ENCODE measurements at regions of chr20 and their contacts with region 1.

Region 1: DNA sequence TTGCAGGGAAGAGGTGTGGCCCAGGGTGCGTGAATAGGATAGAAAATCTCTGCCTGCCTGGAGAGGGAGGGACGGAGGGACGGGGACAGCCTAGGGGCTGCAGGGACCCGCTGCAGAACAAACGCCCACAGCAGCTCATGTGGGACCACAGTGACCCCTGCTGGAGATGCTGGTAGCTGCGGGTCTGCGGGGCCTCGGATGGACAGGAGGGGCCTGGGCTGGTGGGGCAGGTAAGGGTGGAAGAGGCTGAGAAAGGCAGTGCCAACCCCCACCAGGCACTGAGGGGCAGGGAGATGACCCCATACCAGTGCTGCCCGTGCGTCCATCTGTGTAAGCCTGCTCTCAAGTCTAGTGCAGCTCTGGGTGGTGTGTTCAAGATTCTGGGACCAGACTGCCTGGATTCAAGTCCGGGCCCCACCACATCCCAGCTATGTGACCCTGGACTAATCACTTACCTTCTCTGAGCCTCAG is 39.4 kb downstream of the KIAA1755 start:
- DNase-seq: peak; percentile 83
- ATAC-seq: peak; percentile 79

Region 2: DNA sequence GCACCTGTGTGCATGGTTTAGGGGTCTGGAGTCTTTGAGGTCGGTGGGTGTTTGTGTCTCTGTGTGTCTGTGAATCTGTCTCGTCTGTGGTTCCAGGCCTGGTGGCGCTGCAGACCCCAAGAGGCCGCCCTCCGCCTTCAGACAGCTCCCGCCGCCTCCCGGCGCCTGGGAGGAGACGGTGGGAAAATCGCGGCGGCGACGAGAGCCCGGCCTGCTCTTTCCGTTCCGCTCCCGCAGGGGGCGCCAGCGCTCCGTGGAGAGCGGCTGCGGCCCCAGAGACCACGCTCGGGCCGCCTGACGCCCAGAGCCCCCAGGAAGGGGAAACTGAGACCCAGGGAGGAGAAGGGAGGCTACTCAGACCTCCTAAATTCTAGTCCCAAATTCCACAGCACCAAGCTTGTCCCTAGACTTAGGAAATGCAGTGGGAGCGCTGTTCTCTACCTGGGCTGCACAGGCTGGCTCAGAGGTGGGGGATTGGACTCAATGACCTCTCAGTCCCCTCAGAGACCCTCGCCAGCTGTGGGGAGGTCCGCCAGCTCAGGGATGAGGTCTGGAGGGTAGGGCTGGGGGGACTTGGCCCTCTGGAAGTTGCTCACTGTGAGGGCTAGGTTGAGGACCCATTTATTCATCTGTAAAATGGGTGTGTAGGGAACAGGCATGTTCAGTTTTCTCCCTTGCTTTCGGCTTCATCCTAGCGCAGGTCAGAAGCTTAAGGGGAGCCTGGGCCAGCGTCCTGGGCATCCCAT is 656.6 kb before region 1 on chr20:
- intact Hi-C with region 1: loop called (anchors 5 kb)
- DNase-seq: peak; percentile 58
- ATAC-seq: peak; percentile 79

Region 3: GRCh38 chr20:38057351-38057972 is 163.7 kb before region 1 on chr20:
- intact Hi-C with region 1: loop called (anchors 2 kb)
- DNase-seq: peak; percentile 91
- ATAC-seq: peak; percentile 91

Region 4: GRCh38 chr20:38152621-38153231 is 68.4 kb before region 1 on chr20:
- intact Hi-C with region 1: no loop called
- DNase-seq: peak; percentile 92
- ATAC-seq: peak; percentile 63

Region 5: DNA sequence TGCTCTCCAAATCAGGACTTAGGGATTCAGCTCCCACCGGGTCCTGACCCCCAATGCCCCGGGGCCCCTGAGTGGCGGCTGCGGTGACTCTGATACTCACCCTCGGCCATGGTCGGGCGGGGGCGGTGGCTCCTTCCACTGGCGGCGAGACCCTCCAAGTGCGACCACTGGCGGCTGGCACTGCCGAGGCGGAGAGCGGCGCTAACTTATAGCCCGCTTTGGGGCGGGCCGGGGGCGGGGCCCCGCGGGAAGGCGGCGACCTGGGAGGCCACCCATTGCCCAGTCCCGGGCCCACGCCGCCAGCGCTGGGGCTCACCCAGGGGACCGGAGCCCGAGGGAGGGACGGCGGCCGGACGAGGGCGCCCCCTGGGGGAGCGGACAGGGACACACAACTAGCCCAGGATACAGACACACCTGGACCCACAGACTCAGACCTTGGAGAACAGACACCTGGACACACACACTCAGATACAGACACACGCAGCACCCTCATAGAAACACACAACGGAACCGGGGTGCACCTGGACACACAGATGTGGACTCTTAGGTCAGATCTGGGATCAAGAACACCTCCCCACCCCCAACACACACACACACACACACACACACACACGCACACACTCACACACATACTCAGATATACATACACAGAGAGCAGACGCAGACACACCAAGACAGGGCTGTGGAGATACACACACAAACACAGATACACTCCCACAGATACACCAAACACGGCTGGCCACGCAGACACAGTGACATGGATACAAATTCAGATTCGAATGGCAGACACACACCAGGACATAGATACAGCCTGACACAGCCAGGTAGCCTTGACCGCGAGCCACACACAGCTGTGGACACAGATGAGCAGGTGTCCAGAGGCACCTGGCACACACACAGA is 55.8 kb before region 1 on chr20 and contains the start of gene TGM2:
- intact Hi-C with region 1: loop called (anchors 5 kb)
- DNase-seq: peak; percentile 88
- ATAC-seq: peak; percentile 90
- total RNA-seq, gene TGM2: 469 TPM

Measured in Right ventricle myocardium superior (tissue), 1 donor.